ENCODE measurements at regions of chr2 and their contacts with region 1.

Region 1: DNA sequence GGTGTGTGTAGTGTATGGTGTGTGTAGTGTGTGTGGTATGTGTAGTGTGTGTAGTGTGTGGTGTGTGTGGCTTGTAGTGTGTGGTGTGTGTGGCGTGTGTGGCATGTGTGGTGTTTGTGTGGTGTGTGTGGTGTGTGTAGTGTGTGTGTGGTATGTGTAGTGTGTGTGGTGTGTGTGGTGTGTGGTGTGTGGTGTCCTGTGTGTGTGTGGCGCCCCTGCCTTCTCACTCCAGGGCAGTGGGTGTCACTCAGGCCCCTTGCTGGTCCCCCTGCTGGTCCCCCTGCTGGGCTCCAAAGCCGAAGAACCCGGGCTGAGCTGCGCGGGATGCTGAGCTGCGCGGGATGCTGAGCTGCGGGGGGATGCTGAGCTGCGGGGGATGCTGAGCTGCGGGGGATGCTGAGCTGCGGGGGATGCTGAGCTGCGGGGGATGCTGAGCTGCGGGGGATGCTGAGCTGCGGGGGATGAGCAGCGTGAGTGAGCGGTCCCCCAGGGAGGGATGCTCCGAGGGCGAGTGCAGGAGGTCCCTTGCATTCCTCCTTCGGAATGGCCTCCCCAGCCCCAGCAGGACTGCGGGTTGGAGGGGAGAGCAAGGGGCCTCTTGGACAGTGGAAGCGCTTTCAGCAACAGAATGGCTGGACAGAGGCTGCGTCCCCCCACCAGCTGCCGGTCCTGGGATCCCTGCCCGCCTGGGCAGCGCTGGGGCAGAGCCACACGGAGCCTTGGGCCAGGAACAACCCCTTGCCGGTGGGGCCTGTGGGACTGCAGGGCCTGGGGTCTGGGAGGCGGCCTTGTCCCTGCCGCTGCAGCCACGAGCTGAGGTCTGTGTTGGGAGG is 3.4 kb upstream of the RTP5 start:
- DNase-seq: no peak
- H3K4me3 ChIP-seq: no peak overlapping the region
- H3K4me3 Mint-ChIP-seq: peak overlapping the region; percentile 23 to 87 (median 70)
- H3K27ac ChIP-seq: no peak overlapping the region
- H3K27ac Mint-ChIP-seq: peak overlapping the region; percentile 66 to 97 (median 94)
- H3K4me1 ChIP-seq: peaks cover 93% of the 10 kb centered on the region
- H3K4me1 Mint-ChIP-seq: peaks cover 73 to 89% (median 83%) of the 10 kb centered on the region in 3 donors
- H3K27me3 ChIP-seq: no peaks in the 10 kb centered on the region
- H3K27me3 Mint-ChIP-seq: peaks cover 0 to 7% of the 10 kb centered on the region in 2 donors

Region 2: GRCh38 chr2:241702132-241703031 is 163.8 kb before region 1 on chr2:
- CTCF ChIA-PET with region 1: no interaction called
- POLR2A ChIA-PET with region 1: interaction called, 14 read pairs
- DNase-seq: peak; percentile 85 to 94 (median 91)
- H3K4me3 ChIP-seq: peak overlapping the region; percentile 68
- H3K4me3 Mint-ChIP-seq: peak overlapping the region; percentile 78 to 88 (median 84)
- H3K27ac ChIP-seq: peak overlapping the region; percentile 65
- H3K27ac Mint-ChIP-seq: peak overlapping the region; percentile 56 to 97 (median 86)
- H3K4me1 ChIP-seq: peaks cover 7% of the 10 kb centered on the region
- H3K4me1 Mint-ChIP-seq: peaks cover 14 to 26% (median 20%) of the 10 kb centered on the region in 3 donors
- H3K27me3 ChIP-seq: no peaks in the 10 kb centered on the region
- H3K27me3 Mint-ChIP-seq: no peaks in the 10 kb centered on the region

Region 3: GRCh38 chr2:241734467-241735208 is 131.5 kb before region 1 on chr2 and contains the start of gene D2HGDH:
- CTCF ChIA-PET with region 1: interaction called, 13 read pairs
- POLR2A ChIA-PET with region 1: no interaction called
- DNase-seq: peak; percentile 90 to 95 (median 93)
- H3K4me3 ChIP-seq: peak within 1 kb of the TSS; percentile 69
- H3K4me3 Mint-ChIP-seq: peak within 1 kb of the TSS; percentile 80 to 92 (median 85)
- H3K27ac ChIP-seq: peak within 1 kb of the TSS; percentile 74
- H3K27ac Mint-ChIP-seq: peak within 1 kb of the TSS; percentile 56 to 95 (median 78)
- H3K4me1 ChIP-seq: peaks cover 12% of the 10 kb centered on the region
- H3K4me1 Mint-ChIP-seq: peaks cover 29 to 62% (median 33%) of the 10 kb centered on the region in 3 donors
- H3K27me3 ChIP-seq: no peaks in the 10 kb centered on the region
- H3K27me3 Mint-ChIP-seq: no peaks in the 10 kb centered on the region
- total RNA-seq, gene D2HGDH: 22.9 to 23.4 TPM

Region 4: DNA sequence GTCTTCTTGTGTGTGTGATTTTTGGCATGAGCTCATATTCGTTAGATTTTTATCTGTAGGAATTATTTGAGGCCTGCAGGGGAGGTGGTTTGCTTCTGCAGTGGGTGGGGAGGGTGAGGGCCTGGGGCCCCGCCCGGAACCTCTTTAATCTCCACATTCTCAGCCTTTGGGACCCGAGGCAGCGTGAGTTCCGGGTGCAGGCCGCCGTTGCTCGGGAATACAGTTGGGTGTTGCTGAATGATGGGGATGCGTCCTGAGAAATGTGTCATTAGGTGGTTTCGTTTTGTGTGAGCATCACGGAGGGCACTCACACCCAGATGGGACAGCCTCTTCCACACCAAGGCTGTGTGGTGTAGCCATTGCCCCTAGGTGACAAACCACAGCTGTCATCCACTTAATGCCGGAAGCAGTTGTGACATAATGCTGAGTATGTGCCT is 103.2 kb before region 1 on chr2:
- CTCF ChIA-PET with region 1: interaction called, 5 read pairs
- POLR2A ChIA-PET with region 1: interaction called, 22 read pairs
- DNase-seq: peak; percentile 30 to 94 (median 80)
- H3K4me3 ChIP-seq: peak overlapping the region; percentile 31
- H3K4me3 Mint-ChIP-seq: peak overlapping the region; percentile 53 to 87 (median 82)
- H3K27ac ChIP-seq: peak overlapping the region; percentile 85
- H3K27ac Mint-ChIP-seq: peak overlapping the region; percentile 92 to 100 (median 98)
- H3K4me1 ChIP-seq: peaks cover 22% of the 10 kb centered on the region
- H3K4me1 Mint-ChIP-seq: peaks cover 31 to 40% (median 40%) of the 10 kb centered on the region in 3 donors
- H3K27me3 ChIP-seq: no peaks in the 10 kb centered on the region
- H3K27me3 Mint-ChIP-seq: peaks cover 0 to 8% of the 10 kb centered on the region in 2 donors

Region 5: DNA sequence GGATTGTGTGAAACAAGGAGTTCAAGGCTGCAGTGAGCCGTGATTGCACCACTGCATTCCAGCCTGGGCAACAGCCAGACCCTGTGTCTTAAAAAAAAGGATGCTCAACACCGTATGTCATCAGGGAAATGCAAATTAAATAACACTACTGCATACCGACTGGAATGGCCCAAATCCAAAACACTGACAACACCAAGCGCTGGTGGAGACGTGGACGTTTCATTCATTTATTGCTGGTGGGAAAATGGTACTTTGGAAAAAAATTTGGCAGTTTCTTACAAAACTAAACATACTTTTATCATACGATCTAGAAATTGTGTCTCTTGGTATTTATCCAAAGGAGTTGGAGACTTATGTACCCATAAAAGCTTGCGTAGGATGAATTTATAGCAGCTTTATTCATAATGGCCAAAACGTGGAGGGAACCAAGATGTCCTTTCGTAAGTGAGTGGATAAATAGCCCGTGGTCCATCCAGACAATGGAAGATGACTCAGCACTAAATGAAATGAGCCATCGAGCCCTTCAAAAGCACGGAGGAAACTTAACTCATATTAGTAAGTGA is 33.0 kb before region 1 on chr2:
- CTCF ChIA-PET with region 1: no interaction called
- POLR2A ChIA-PET with region 1: no interaction called
- DNase-seq: no peak
- H3K4me3 ChIP-seq: no peak overlapping the region
- H3K4me3 Mint-ChIP-seq: no peak overlapping the region
- H3K27ac ChIP-seq: no peak overlapping the region
- H3K27ac Mint-ChIP-seq: peak overlapping the region in 1 of 8 donors; percentile 3
- H3K4me1 ChIP-seq: no peaks in the 10 kb centered on the region
- H3K4me1 Mint-ChIP-seq: peaks cover 9 to 13% (median 9%) of the 10 kb centered on the region in 3 donors
- H3K27me3 ChIP-seq: no peaks in the 10 kb centered on the region
- H3K27me3 Mint-ChIP-seq: peaks cover 0 to 4% of the 10 kb centered on the region in 2 donors

Region 6: DNA sequence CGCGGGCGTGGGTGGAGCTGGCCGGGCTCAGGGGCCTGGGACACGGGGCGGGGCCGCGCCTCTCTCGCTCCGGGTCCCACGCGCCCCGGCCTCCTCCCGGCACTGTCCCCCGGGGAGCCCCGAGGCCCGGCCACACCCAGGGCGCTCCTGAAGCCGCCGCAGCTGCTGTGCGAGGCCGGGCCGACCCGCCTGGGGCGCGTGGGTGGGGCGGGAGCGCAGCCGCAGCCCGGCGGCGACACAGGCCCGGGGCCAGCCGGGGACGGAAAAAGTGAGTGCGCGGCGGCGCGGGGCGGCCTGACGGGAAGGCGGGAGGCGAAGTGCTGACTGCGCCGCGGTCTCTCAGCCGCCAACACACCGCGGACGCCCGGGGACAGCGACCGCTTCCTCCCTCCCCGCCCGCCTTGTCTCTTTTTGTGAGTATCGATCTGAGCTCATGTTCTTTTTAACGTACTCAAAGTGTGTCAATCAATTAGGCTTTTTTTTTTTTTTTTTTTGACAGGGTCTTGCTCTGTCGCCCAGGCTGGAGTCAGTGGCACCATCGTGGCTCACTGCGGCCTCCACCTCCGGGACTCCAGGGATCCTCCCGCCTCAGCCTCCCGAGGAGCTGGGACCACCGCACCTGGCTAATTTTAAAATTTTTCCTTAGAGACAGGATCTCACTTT is 22.0 kb before region 1 on chr2:
- CTCF ChIA-PET with region 1: interaction called, 8 read pairs
- POLR2A ChIA-PET with region 1: interaction called, 15 read pairs
- DNase-seq: peak; percentile 53 to 85 (median 75)
- H3K4me3 ChIP-seq: peak overlapping the region; percentile 41
- H3K4me3 Mint-ChIP-seq: peak overlapping the region; percentile 68 to 91 (median 80)
- H3K27ac ChIP-seq: peak overlapping the region; percentile 47
- H3K27ac Mint-ChIP-seq: peak overlapping the region in 7 of 8 donors; percentile 43 to 88 (median 78)
- H3K4me1 ChIP-seq: peaks cover 23% of the 10 kb centered on the region
- H3K4me1 Mint-ChIP-seq: peaks cover 34 to 48% (median 42%) of the 10 kb centered on the region in 3 donors
- H3K27me3 ChIP-seq: no peaks in the 10 kb centered on the region
- H3K27me3 Mint-ChIP-seq: no peaks in the 10 kb centered on the region

Region 7: GRCh38 chr2:241877989-241878970 is 12.1 kb after region 1 on chr2:
- CTCF ChIA-PET with region 1: interaction called, 35 read pairs
- POLR2A ChIA-PET with region 1: interaction called, 6 read pairs
- DNase-seq: peak; percentile 67 to 83 (median 71)
- H3K4me3 ChIP-seq: no peak overlapping the region
- H3K4me3 Mint-ChIP-seq: no peak overlapping the region
- H3K27ac ChIP-seq: no peak overlapping the region
- H3K27ac Mint-ChIP-seq: peak overlapping the region in 2 of 8 donors; percentile 63 to 93
- H3K4me1 ChIP-seq: peaks cover 25% of the 10 kb centered on the region
- H3K4me1 Mint-ChIP-seq: peaks cover 27 to 49% (median 28%) of the 10 kb centered on the region in 3 donors
- H3K27me3 ChIP-seq: no peaks in the 10 kb centered on the region
- H3K27me3 Mint-ChIP-seq: peaks cover 0 to 6% of the 10 kb centered on the region in 2 donors

Region 8: GRCh38 chr2:242098445-242099128 is 232.4 kb after region 1 on chr2:
- CTCF ChIA-PET with region 1: no interaction called
- POLR2A ChIA-PET with region 1: no interaction called
- DNase-seq: no peak
- H3K4me3 ChIP-seq: no peak overlapping the region
- H3K4me3 Mint-ChIP-seq: no peak overlapping the region
- H3K27ac ChIP-seq: peak overlapping the region; percentile 62
- H3K27ac Mint-ChIP-seq: no peak overlapping the region
- H3K4me1 ChIP-seq: no peaks in the 10 kb centered on the region
- H3K4me1 Mint-ChIP-seq: peaks cover 15 to 29% (median 19%) of the 10 kb centered on the region in 3 donors
- H3K27me3 ChIP-seq: no peaks in the 10 kb centered on the region
- H3K27me3 Mint-ChIP-seq: no peaks in the 10 kb centered on the region

Measured in CD8-positive, alpha-beta memory T cell (primary cell).